Motor neuron (in vitro differentiated cells): ENCODE measurements at regions of chrX and their contacts with region 1.

Region 1: GRCh38 chrX:151151665-151152267 is 24.6 kb upstream of the GPR50 start:
- ATAC-seq: peak; percentile 57 to 85 (median 66)
- H3K4me3 ChIP-seq: no peak overlapping the region
- H3K27ac ChIP-seq: no peak overlapping the region
- H3K4me1 ChIP-seq: no peaks in the 10 kb centered on the region

Region 2: GRCh38 chrX:151287954-151288353 is 136.2 kb after region 1 on chrX:
- in situ Hi-C with region 1: no loop called
- ATAC-seq: peak in 6 of 8 experiments; percentile 26 to 74 (median 42)
- H3K4me3 ChIP-seq: no peak overlapping the region
- H3K27ac ChIP-seq: no peak overlapping the region
- H3K4me1 ChIP-seq: no peaks in the 10 kb centered on the region

Region 3: DNA sequence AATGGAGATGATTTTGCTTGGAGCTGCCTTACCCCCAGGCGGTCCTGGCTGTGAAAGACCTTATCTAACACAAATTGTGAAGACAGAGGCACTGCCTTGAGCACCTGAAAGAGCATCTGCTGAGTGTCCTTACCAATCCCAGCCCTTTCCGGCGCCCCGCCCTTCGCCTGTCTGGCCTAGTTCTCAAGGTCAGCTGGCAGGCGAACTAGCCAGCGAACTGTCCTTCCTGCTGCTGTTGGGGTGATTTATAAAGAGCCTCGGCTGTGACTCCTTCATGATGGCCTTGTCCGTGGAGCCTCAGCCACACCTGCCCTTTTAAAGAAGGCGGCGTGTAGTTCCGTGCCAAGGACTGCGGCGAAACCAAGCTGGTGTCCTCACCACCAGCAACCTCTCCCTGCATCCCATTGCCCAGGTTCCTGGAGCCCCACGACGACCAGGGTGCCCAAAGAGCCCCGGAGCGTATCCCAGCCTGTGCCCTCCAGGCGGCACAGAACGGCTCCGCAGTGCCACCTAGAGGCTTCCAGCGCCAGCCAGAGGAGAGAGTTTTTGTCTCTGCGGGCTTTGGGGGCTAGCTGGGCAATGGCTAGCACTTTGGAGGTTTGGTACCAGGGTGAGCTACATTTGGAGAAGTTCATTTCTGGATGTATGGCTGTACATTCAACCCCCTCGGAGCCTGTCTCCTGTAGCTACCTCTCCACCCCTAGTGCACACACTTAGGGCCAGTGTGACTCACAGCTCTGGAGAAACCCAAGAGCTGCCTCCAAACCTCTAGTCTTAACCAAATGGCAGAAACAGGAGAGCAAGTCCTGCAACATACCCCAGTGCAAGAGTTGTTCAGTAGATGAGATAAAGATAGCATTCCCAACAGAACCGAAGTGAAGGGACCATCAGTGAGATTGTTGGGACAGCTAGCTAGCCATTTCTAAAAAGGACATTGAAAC is 208.4 kb after region 1 on chrX:
- in situ Hi-C with region 1: loop called in 2 of 9 experiments (anchors 25 kb)
- ATAC-seq: peak; percentile 39 to 96 (median 68)
- H3K4me3 ChIP-seq: peak overlapping the region in 1 of 5 donors; percentile 11
- H3K27ac ChIP-seq: no peak overlapping the region
- H3K4me1 ChIP-seq: no peaks in the 10 kb centered on the region

Region 4: DNA sequence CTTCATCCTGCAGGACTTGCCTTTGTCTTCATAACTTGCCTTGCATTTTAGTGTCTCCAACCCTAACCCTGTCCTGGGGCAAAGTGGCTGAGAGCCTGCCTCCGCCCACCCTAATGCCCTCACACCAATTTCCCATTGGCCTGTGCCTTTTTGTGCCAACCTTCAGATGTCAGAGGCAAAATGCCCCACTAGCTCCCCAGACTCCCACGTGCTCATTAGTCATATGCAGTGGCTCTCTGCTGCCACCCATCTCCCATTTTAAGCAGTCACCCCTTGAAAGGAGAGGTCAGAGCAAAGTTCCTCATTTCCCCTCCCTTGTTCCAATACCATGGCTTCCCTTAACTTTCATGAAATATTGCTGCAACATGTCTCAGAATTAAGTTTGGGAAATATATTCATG is 336.9 kb after region 1 on chrX:
- in situ Hi-C with region 1: loop called in 1 of 9 experiments (anchors 25 kb)
- ATAC-seq: peak in 3 of 8 experiments; percentile 62 to 78 (median 76)
- H3K4me3 ChIP-seq: no peak overlapping the region
- H3K27ac ChIP-seq: no peak overlapping the region
- H3K4me1 ChIP-seq: no peaks in the 10 kb centered on the region

Region 5: DNA sequence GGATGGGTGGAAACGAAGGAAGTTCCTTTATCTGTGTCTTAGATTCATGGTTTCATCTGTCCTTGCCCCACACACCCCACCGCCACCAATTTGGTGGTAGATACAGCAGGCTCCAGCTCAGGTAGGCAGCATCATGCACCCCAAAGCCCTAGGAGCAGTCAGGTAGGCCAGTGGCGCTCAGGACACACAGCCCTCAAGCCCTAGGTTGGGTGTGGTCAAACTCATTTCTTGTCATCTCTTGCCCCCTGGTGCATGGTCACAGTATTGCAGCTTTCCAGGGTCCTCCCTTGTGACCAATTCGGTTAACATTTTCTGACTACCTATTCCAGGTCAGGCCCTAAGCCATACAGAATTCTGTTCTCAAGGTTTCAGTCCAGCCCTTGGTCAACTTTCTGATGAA is 529.0 kb after region 1 on chrX:
- in situ Hi-C with region 1: loop called in 4 of 9 experiments (anchors 10 to 25 kb)
- ATAC-seq: peak in 5 of 8 experiments; percentile 5 to 55 (median 44)
- H3K4me3 ChIP-seq: no peak overlapping the region
- H3K27ac ChIP-seq: no peak overlapping the region
- H3K4me1 ChIP-seq: no peaks in the 10 kb centered on the region